Prostate gland (tissue), 2 donors: ENCODE measurements at regions of chr16 and their contacts with region 1.

Region 1: DNA sequence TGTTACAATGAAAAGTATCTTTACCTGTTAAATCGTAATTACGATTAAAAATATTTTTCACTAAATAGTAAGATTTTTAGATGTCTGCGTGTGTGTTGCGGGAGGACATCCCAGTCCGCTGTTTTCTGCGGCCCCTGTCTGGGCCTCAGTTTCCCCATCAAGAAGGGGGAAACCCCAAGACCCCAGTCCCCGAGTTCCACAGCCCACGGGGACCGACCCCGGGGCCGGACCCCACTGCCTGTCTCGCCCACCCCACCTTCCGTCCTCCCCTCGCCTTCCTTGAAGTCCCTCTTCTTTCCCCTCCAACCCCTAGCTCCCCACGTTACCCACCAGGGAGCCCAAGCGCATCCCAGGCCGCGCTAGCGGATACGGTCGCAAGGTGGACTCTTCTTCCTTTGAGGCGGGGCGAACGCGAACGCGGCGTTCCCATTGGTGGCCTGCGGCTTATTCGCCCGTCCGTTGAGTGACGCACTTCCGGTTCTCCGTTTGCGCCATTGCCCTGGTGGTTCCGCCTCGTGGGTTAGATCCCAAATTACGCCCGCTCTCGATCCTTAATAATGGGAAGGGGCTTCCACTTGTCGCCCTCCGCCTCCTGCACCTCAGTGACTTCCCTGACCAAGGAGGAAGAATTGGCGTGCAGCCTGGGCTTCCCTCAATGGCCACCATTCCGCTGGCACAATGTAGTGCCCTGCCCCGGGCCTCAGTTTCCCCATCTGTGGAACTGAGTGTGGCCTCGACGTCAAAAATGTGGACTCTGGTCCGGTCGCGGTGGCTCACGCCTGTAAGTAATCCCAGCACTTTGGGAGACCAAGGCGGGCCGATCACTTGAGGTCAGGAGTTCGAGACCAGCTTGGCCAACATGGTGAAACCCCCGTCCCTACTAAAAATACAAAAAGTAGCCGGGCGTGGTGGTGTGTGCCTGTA is at the start of gene NSMCE1:
- DNase-seq: peak; percentile 97
- H3K4me3 ChIP-seq: peak within 1 kb of the TSS; percentile 68 to 92
- H3K27ac ChIP-seq: peak within 1 kb of the TSS; percentile 83 to 84
- H3K4me1 ChIP-seq: no peaks in the 10 kb centered on the region
- H3K27me3 ChIP-seq: no peaks in the 10 kb centered on the region
- CTCF ChIP-seq: peak in 3 of 4 experiments; percentile 17 to 39 (median 33)
- POLR2A ChIP-seq: peak; percentile 80
- total RNA-seq, gene NSMCE1: 55.4 to 71.7 TPM

Region 2: GRCh38 chr16:27235055-27235937 is 33.3 kb before region 1 on chr16:
- intact Hi-C with region 1: loop called (anchors 2 kb)
- DNase-seq: peak; percentile 83
- H3K4me3 ChIP-seq: peak overlapping the region in 1 of 2 donors; percentile 3
- H3K27ac ChIP-seq: peak overlapping the region; percentile 56 to 80
- H3K4me1 ChIP-seq: peaks cover 28% of the 10 kb centered on the region
- H3K27me3 ChIP-seq: no peaks in the 10 kb centered on the region
- CTCF ChIP-seq: peak; percentile 54 to 80 (median 74)
- POLR2A ChIP-seq: no peak

Region 3: DNA sequence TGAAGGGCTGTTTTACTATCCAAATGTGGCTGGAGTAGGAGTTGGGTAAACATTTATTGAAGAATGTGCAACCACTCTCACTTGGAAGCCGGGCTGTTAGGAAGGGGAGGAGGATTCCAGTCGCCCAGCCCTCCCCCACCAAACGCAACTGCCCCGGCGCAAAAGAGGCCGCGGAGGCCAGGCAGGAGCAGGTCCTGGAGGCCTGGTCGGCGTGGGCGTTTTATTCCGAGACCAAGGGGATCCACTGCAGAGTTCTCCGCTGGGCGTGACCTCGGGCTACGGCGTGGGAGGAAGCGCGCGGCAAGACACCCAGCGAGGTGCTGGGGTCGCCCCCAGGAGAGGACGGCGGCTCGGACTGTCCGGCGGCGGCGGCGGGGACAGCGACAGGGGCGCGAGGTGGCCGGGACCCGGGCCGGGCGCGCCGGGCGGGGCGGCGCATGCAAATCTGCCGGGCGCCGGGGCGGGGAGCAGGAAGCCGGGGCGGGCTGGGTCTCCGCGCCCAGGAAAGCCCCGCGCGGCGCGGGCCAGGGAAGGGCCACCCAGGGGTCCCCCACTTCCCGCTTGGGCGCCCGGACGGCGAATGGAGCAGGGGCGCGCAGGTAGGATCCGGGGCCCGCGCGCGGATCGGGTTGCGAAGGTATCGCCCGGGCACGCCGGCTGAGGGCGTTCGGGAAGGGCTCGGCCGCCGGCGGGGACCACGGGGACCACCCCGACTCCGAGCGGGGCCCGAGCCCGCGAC is 45.0 kb after region 1 on chr16 and contains the start of gene IL4R:
- intact Hi-C with region 1: loop called (anchors 5 kb)
- DNase-seq: peak; percentile 42
- H3K4me3 ChIP-seq: peak within 1 kb of the TSS; percentile 76 to 79
- H3K27ac ChIP-seq: peak within 1 kb of the TSS; percentile 91 to 92
- H3K4me1 ChIP-seq: peaks cover 6% of the 10 kb centered on the region
- H3K27me3 ChIP-seq: no peaks in the 10 kb centered on the region
- CTCF ChIP-seq: no peak
- POLR2A ChIP-seq: peak; percentile 50
- total RNA-seq, gene IL4R: 30.7 to 89.2 TPM